Ovary (tissue), 10 donors: ENCODE measurements at regions of chr2 and their contacts with region 1.

Region 1: DNA sequence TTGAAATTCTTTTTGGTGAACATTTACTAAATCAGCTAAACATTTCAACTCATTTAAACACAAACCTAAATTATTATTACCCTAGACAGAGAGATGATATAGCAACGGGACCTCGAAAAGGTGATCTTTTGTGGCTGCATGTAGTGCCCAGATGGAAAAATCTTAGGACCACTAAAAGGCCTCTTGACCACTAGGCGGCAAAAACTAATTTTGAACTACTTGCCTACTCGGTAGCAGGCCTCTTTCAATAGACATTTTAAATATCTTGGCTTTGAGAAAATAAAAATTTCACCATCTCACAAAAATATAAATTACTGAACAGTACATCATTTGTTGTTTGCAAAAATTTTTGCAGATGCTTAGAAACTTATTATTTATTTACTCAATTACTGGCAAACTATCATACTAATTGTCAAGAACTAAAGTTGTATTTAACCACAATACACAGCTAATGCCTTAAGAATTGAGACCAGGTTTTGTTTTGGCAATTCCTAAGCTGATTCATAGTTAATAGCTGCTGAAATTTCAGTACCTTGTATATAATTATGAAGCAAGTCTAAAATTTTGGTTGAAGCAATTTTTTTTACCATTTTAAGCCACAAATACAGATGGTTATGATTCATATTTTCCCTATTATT is 9.4 kb downstream of the COL3A1 start:
- DNase-seq: no peak
- H3K4me3 ChIP-seq: no peak overlapping the region
- H3K27ac ChIP-seq: no peak overlapping the region
- H3K4me1 ChIP-seq: peaks cover 4% of the 10 kb centered on the region
- H3K27me3 ChIP-seq: no peaks in the 10 kb centered on the region
- CTCF ChIP-seq: peak in 2 of 3 donors; percentile 28 to 46
- EP300 ChIP-seq: no peak
- POLR2A ChIP-seq: no peak

Region 2: GRCh38 chr2:188534875-188535274 is 448.7 kb before region 1 on chr2:
- intact Hi-C with region 1: loop called in 1 of 4 experiments (anchors 5 kb)
- DNase-seq: no peak
- H3K4me3 ChIP-seq: no peak overlapping the region
- H3K27ac ChIP-seq: no peak overlapping the region
- H3K4me1 ChIP-seq: no peaks in the 10 kb centered on the region
- H3K27me3 ChIP-seq: no peaks in the 10 kb centered on the region
- CTCF ChIP-seq: no peak
- EP300 ChIP-seq: no peak
- POLR2A ChIP-seq: no peak

Region 3: GRCh38 chr2:188835821-188836220 is 147.7 kb before region 1 on chr2:
- intact Hi-C with region 1: no loop called
- DNase-seq: no peak
- H3K4me3 ChIP-seq: no peak overlapping the region
- H3K27ac ChIP-seq: no peak overlapping the region
- H3K4me1 ChIP-seq: peaks cover 1% of the 10 kb centered on the region
- H3K27me3 ChIP-seq: no peaks in the 10 kb centered on the region
- CTCF ChIP-seq: no peak
- EP300 ChIP-seq: no peak
- POLR2A ChIP-seq: no peak

Region 4: DNA sequence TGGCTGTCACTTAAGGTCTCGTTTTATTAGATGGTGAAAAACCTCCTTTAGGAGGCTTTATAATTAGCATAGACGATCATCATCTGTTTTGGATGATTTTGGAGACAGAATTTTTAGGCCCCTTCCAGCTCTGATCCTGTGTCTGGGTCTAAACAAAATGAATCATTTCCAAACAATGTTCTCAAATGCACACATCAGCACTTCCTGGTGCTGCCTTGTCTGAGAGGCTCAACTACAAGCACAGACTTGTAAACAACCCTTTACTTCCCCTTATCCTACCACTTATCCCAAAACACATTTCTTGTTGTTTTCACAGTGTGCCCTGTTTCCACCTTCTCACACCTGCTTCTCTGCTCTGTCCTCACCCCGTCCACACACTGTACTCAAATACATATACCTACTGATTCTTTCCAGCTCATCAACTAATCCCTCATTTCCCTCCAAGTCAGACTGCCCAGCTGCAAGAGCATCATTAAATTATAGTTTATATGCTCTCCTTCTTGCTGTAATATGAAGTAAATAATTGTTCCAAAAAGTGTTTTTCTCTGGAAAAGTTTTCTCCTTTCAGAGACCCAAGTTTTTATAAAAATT is 80.5 kb before region 1 on chr2:
- intact Hi-C with region 1: no loop called
- DNase-seq: no peak
- H3K4me3 ChIP-seq: no peak overlapping the region
- H3K27ac ChIP-seq: no peak overlapping the region
- H3K4me1 ChIP-seq: peaks cover 4% of the 10 kb centered on the region
- H3K27me3 ChIP-seq: no peaks in the 10 kb centered on the region
- CTCF ChIP-seq: no peak
- EP300 ChIP-seq: no peak
- POLR2A ChIP-seq: no peak

Region 5: GRCh38 chr2:188931361-188931760 is 52.2 kb before region 1 on chr2:
- intact Hi-C with region 1: no loop called
- DNase-seq: no peak
- H3K4me3 ChIP-seq: no peak overlapping the region
- H3K27ac ChIP-seq: no peak overlapping the region
- H3K4me1 ChIP-seq: no peaks in the 10 kb centered on the region
- H3K27me3 ChIP-seq: no peaks in the 10 kb centered on the region
- CTCF ChIP-seq: no peak
- EP300 ChIP-seq: no peak
- POLR2A ChIP-seq: no peak

Region 6: DNA sequence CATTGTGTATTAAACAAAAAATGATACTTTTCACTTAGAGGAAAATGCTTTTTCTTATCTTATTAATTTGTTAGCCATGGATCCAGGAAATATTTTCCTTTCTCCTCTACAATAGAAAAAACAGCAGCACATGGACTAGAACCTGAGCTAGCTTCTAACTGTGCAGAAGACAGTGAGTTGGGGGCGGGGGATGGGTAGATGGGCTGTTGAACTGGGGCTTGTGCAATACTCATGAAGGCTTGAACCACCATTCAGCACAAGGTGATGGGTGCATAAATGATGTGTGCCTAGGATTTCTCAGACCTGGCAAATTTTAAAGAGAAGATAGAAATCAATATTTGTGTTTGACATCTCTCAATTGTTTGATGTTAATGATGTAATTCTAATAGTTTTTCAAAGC is 154.0 kb after region 1 on chr2:
- intact Hi-C with region 1: no loop called
- DNase-seq: peak in 2 of 5 donors; percentile 30 to 34
- H3K4me3 ChIP-seq: no peak overlapping the region
- H3K27ac ChIP-seq: no peak overlapping the region
- H3K4me1 ChIP-seq: no peaks in the 10 kb centered on the region
- H3K27me3 ChIP-seq: no peaks in the 10 kb centered on the region
- CTCF ChIP-seq: no peak
- EP300 ChIP-seq: no peak
- POLR2A ChIP-seq: no peak